ENCODE measurements at regions of chr12 and their contacts with region 1.

Region 1: DNA sequence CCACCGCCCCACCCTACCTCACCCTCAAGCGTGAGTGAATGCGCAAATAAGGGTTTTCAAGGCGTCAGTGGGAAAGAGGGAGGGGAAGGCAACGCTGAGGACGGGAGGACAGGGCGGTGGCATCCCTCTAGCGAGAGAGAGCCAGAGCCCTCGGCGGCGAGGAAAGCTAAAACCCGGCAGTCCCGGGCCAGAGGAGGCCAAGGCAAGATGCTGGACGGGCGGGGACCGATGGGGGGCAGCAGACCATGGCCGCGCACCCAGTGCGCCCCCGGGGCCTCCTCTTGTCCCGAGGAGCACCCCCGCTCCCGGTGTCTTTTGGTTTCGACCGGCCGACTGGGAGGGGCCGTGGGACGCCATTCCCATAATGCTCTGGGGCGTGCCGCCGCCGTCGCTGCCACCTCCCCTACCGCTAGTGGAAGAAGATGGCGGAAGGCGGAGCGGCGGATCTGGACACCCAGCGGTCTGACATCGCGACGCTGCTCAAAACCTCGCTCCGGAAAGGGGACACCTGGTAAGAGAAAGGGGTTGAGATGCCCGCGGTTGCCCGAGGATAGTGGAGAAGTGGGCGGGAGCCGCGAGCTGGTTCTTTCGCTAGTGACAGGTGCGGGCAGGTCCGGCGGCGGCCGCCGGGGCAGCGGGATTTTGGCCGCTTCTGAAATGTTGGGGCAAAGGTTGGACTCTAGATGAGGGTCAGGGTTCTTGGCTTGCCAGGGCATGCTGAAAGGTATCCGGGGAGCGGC is at the start of gene USP15:
- DNase-seq: peak; percentile 98
- ATAC-seq: peak; percentile 99
- H3K4me3 ChIP-seq: peak within 1 kb of the TSS; percentile 63 to 92
- H3K27ac ChIP-seq: peak within 1 kb of the TSS; percentile 23 to 85
- H3K4me1 ChIP-seq: peaks cover 0 to 2% of the 10 kb centered on the region in 2 donors
- H3K27me3 ChIP-seq: no peaks in the 10 kb centered on the region
- total RNA-seq, gene USP15: 97.9 to 102 TPM

Region 2: DNA sequence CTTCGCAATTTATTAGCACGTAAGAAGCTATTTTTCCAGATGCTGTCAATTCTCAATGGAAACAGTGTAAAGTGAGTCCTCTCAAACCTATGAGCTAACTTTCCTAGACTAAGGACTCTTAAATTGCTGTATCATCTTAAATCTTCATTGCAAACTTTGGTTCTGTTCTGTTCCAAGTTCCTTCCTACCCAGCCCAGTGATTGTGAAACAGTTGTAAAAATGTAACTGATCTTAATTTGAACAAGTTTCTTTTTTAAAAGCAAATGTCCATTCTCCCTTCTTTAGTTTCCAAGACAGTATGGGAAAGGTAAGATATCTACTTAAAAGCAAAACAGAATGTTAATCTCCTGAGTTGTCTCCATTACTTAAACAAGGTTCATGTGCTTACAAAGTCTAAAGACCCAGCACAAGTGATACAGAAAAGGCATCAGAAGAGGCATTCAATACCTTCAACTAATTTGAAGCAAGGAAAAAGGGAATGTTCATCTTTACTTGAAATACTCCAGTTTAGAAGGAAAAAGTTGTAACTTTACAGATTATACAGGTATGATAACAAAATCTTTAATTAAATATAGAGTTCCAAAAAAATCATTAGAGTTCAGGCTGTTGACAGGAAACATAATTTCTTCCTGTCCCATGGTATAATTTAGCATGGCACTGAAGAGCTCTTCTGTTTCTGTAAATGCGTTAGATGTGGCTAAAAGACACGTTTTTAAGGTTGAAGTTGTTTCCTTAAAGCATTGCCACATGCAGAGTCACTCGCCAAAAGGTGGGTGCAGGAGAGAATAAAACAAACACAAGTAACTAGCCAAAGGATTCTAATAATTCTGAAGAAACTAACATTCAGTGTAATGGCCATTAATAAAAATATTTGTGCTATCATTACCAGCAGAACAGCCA is 101.5 kb before region 1 on chr12:
- intact Hi-C with region 1: no loop called
- DNase-seq: no peak
- ATAC-seq: no peak
- H3K4me3 ChIP-seq: no peak overlapping the region
- H3K27ac ChIP-seq: no peak overlapping the region
- H3K4me1 ChIP-seq: peaks cover 2% of the 10 kb centered on the region in 2 donors
- H3K27me3 ChIP-seq: no peaks in the 10 kb centered on the region

Region 3: GRCh38 chr12:62361048-62361447 is 100.9 kb after region 1 on chr12:
- intact Hi-C with region 1: loop called in 1 of 2 experiments (anchors 5 kb)
- DNase-seq: no peak
- ATAC-seq: no peak
- H3K4me3 ChIP-seq: no peak overlapping the region
- H3K27ac ChIP-seq: no peak overlapping the region
- H3K4me1 ChIP-seq: no peaks in the 10 kb centered on the region
- H3K27me3 ChIP-seq: no peaks in the 10 kb centered on the region

Region 4: GRCh38 chr12:62379026-62379722 is 119.0 kb after region 1 on chr12:
- intact Hi-C with region 1: loop called in 1 of 2 experiments (anchors 10 kb)
- DNase-seq: no peak
- ATAC-seq: no peak
- H3K4me3 ChIP-seq: no peak overlapping the region
- H3K27ac ChIP-seq: no peak overlapping the region
- H3K4me1 ChIP-seq: no peaks in the 10 kb centered on the region
- H3K27me3 ChIP-seq: no peaks in the 10 kb centered on the region

Region 5: GRCh38 chr12:62435303-62436163 is 175.4 kb after region 1 on chr12:
- intact Hi-C with region 1: loop called in 1 of 2 experiments (anchors 10 kb)
- DNase-seq: peak; percentile 77 to 78
- ATAC-seq: peak; percentile 87
- H3K4me3 ChIP-seq: peak overlapping the region; percentile 23 to 32
- H3K27ac ChIP-seq: no peak overlapping the region
- H3K4me1 ChIP-seq: no peaks in the 10 kb centered on the region
- H3K27me3 ChIP-seq: no peaks in the 10 kb centered on the region